ENCODE measurements at regions of chr16 and their contacts with region 1.

Region 1: DNA sequence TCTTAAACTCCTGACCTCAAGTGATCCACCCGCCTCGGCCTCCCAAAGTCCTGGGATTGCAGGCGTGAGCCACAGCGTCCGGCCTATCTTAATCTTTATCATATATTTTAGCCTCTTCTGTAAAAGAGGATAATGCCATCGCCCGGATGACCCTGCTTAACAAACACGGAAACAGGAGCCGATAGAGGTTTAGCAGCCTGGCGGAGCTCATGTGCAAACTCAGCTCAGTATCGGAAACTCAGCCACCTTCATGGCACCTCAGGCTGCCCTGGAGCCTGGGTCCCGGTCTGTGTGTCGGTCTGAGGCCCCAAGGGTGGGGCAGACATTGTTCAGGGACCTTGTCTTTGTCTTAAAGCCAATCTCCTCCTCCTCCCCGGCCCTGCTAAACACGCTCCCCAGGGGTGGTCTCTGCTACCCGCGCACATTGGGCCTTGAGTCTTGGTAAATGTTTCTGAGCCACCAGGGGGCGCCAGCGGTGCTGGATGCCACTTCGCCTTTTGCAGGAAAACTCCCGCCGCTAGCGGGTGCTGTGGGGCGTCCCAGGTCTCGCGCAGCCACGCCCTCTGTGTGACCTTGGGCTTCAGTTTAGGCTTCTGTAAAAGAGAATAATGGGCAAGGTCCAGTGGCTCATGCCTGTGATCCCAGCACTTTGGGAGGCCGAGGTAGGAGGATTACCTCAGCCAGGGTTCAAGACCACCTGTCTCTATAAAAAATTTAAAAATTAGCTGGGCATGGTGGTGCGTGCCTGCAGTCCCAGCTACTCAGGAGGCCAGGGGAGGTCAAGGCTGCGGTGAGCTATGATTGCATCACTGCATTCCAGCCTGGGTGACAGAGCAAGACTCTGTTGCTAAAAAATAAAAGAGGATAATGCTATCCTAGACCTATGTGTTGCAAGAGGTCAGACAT is 2.7 kb downstream of the CETP start:
- DNase-seq: peak; percentile 88 to 100
- H3K4me3 ChIP-seq: no peak overlapping the region
- H3K27ac ChIP-seq: no peak overlapping the region
- H3K4me1 ChIP-seq: peaks cover 0 to 2% (median 1%) of the 10 kb centered on the region in 4 experiments; a peak in 4 of 7 replicates
- H3K27me3 ChIP-seq: no peaks in the 10 kb centered on the region; a peak in 1 of 7 replicates
- CTCF ChIP-seq: peak; percentile 98 to 100 (median 99)
- EP300 ChIP-seq: peak in 1 of 2 experiments; percentile 62; a peak in 1 of 3 replicates
- POLR2A ChIP-seq: no peak
- RAD21 ChIP-seq: peak; percentile 79 to 86

Region 2: DNA sequence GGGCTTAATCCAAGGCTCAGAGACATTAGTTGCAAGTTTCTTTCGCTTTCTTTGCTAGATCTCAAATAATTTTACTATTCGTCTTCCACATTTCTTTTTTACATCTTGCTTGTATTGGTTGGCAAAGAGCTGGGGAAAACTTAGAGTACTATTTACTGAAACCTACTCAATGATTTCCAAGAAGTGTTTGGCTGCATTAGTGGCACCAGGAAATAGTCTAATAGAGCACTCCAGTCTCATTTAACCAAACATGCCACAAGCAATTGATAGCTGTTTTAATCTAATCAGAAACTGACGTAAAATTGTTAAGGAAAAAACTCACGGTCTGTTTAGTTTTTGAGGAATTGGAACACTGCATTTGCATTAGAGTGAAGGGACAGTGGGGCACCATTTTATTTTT is 205.6 kb before region 1 on chr16:
- CTCF ChIA-PET with region 1: no interaction called
- POLR2A ChIA-PET with region 1: no interaction called
- DNase-seq: no peak
- H3K4me3 ChIP-seq: no peak overlapping the region
- H3K27ac ChIP-seq: no peak overlapping the region
- H3K4me1 ChIP-seq: no peaks in the 10 kb centered on the region
- H3K27me3 ChIP-seq: no peaks in the 10 kb centered on the region
- CTCF ChIP-seq: no peak
- EP300 ChIP-seq: no peak
- POLR2A ChIP-seq: no peak
- RAD21 ChIP-seq: no peak

Region 3: DNA sequence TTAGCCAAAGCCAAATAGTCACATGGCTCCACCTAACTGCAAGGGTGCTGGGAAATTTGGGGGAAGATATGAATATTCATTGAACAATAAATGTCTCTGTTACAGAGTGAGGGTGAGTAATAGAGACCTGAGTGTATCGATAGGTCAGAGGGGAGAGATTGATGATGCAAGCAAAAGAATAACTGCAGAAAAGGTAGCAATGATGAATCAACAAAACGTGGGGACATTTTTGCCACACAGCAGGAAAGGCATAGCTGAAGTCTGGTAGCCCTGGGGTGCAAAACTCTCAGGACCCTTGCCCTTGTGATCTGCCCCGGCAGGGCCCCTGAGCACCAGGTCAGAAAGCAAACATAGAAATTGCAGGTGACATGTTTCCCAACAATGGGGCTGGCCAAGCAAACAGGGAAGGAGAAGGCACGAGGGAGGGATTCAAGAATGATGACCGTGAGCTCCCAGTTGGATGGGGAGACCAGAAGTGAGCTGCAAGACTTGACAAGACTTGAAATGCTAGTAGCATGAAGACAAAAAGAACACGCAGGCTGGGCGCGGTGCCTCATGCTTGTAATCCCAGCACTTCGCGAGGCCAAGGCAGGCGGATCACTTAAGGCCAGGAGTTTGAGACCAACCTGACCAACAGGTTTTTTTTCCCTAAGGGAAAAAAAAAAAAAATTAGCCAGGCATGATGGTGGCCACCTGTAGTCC is 45.2 kb before region 1 on chr16:
- CTCF ChIA-PET with region 1: no interaction called
- POLR2A ChIA-PET with region 1: no interaction called
- DNase-seq: no peak
- H3K4me3 ChIP-seq: no peak overlapping the region
- H3K27ac ChIP-seq: no peak overlapping the region
- H3K4me1 ChIP-seq: no peaks in the 10 kb centered on the region
- H3K27me3 ChIP-seq: no peaks in the 10 kb centered on the region
- CTCF ChIP-seq: no peak
- EP300 ChIP-seq: no peak
- POLR2A ChIP-seq: no peak
- RAD21 ChIP-seq: no peak

Region 4: DNA sequence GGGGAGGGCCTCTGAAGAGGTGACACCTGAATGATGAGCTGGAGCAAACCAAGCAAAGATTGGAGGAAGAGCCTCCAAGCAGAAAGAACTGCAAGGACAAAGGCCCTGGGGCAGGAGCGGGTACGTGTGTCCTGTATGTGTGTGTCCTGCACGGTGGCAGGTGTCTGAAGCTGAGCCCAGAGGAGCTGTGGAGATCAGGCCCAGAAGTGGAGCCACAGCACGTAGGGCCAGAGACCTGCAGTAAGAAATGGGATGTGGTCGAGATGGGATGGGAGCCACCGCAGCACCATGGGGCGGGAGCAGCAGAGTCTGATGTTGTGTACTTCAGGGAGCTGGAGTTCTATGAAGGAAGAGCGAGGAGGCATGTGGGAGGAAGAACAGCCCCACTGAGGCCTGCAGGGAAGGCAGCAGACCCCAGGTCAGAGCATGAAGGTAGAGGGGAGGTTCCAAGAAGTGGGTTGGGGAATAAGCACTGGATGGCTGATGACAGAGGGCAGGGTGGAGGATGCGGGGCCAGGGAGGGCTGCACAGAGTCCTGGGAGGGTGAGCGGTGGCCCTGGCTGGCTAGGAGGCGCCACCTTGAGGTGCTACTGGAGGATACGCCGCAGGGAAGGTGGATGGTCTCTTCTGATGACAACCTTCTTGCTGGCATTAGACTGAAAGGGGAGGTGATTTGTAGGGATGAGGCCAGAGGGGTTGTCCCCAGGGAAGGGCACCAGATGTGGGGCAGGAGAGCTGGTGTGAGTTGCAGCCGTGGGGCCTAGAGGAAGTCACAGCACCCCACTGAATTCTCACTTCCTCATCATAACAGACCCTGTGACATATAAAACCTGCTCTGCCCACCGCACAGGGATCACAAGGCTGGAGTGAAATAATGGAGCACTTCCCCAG is 13.4 kb before region 1 on chr16:
- CTCF ChIA-PET with region 1: interaction called, 19 read pairs
- POLR2A ChIA-PET with region 1: no interaction called
- DNase-seq: peak in 1 of 2 experiments; percentile 74
- H3K4me3 ChIP-seq: no peak overlapping the region
- H3K27ac ChIP-seq: no peak overlapping the region
- H3K4me1 ChIP-seq: no peaks in the 10 kb centered on the region
- H3K27me3 ChIP-seq: no peaks in the 10 kb centered on the region
- CTCF ChIP-seq: peak; percentile 78 to 90 (median 88)
- EP300 ChIP-seq: no peak
- POLR2A ChIP-seq: no peak
- RAD21 ChIP-seq: peak; percentile 83

Region 5: GRCh38 chr16:57013229-57013628 is 48.7 kb after region 1 on chr16:
- CTCF ChIA-PET with region 1: interaction called, 38 read pairs
- POLR2A ChIA-PET with region 1: no interaction called
- DNase-seq: no peak
- H3K4me3 ChIP-seq: no peak overlapping the region
- H3K27ac ChIP-seq: no peak overlapping the region
- H3K4me1 ChIP-seq: peaks cover 0 to 2% (median 0%) of the 10 kb centered on the region in 4 experiments; a peak in 1 of 7 replicates
- H3K27me3 ChIP-seq: no peaks in the 10 kb centered on the region
- CTCF ChIP-seq: no peak
- EP300 ChIP-seq: no peak
- POLR2A ChIP-seq: no peak
- RAD21 ChIP-seq: no peak

Region 6: GRCh38 chr16:57031156-57031555 is 66.7 kb after region 1 on chr16:
- CTCF ChIA-PET with region 1: interaction called, 13 read pairs
- POLR2A ChIA-PET with region 1: no interaction called
- DNase-seq: no peak
- H3K4me3 ChIP-seq: no peak overlapping the region
- H3K27ac ChIP-seq: no peak overlapping the region
- H3K4me1 ChIP-seq: no peaks in the 10 kb centered on the region
- H3K27me3 ChIP-seq: no peaks in the 10 kb centered on the region
- CTCF ChIP-seq: no peak
- EP300 ChIP-seq: no peak
- POLR2A ChIP-seq: no peak
- RAD21 ChIP-seq: no peak

Region 7: GRCh38 chr16:57045694-57046381 is 81.3 kb after region 1 on chr16:
- CTCF ChIA-PET with region 1: interaction called, 75 read pairs
- POLR2A ChIA-PET with region 1: no interaction called
- DNase-seq: peak in 1 of 2 experiments; percentile 84
- H3K4me3 ChIP-seq: no peak overlapping the region
- H3K27ac ChIP-seq: no peak overlapping the region
- H3K4me1 ChIP-seq: no peaks in the 10 kb centered on the region
- H3K27me3 ChIP-seq: no peaks in the 10 kb centered on the region
- CTCF ChIP-seq: peak; percentile 66 to 87 (median 79)
- EP300 ChIP-seq: no peak
- POLR2A ChIP-seq: no peak
- RAD21 ChIP-seq: peak; percentile 61 to 73

Region 8: GRCh38 chr16:57113042-57113453 is 148.6 kb after region 1 on chr16:
- CTCF ChIA-PET with region 1: no interaction called
- POLR2A ChIA-PET with region 1: no interaction called
- DNase-seq: no peak
- H3K4me3 ChIP-seq: no peak overlapping the region
- H3K27ac ChIP-seq: no peak overlapping the region
- H3K4me1 ChIP-seq: peaks cover 0 to 13% (median 4%) of the 10 kb centered on the region in 4 experiments; a peak in 4 of 7 replicates
- H3K27me3 ChIP-seq: no peaks in the 10 kb centered on the region
- CTCF ChIP-seq: no peak
- EP300 ChIP-seq: no peak
- POLR2A ChIP-seq: no peak
- RAD21 ChIP-seq: no peak